ENCODE measurements at regions of chr11 and their contacts with region 1.

Region 1: DNA sequence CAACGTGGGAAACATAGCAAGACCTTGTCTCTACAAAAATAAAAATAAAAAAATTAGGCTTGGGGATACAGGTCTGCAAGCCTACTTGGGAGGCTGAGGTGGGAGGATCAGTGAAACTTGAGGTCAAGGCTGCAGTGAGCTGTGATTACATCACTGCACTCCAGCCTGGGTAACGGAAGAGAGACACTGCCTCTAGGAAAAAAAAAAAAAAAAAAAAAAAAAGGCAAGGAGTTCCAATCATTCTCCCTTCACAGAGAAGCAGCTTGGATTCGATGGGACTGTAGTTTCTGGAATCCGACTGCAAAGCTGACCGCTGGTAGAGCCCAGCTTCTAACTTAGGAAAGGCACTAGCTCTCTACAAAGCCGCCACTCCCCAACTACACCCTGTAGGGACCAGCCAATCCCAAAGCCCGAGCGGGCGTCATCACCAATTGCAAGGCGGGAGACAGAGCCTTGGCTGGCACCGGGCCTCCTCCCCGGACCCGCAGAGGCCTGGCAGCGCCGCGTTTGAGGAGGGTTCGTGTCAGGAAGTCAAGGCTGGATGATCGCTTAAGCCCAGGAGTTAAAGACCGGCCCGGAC is 699 bp upstream of the DDB2 start:
- DNase-seq: peak; percentile 49
- ATAC-seq: peak; percentile 88
- H3K4me3 ChIP-seq: peak overlapping the region; percentile 92
- H3K27ac ChIP-seq: peak overlapping the region; percentile 55
- H3K4me1 ChIP-seq: peaks cover 9% of the 10 kb centered on the region
- H3K27me3 ChIP-seq: no peaks in the 10 kb centered on the region
- CTCF ChIP-seq: no peak
- EP300 ChIP-seq: no peak
- POLR2A ChIP-seq: no peak
- RAD21 ChIP-seq: no peak

Region 2: GRCh38 chr11:47233989-47234668 is 20.1 kb after region 1 on chr11:
- CTCF ChIA-PET with region 1: interaction called, 22 read pairs
- POLR2A ChIA-PET with region 1: interaction called, 4 read pairs
- RAD21 ChIA-PET with region 1: interaction called, 6 read pairs
- SMC1A ChIA-PET with region 1: interaction called, 4 read pairs
- in situ Hi-C with region 1: no loop called
- intact Hi-C with region 1: no loop called
- DNase-seq: no peak
- ATAC-seq: peak; percentile 45
- H3K4me3 ChIP-seq: no peak overlapping the region
- H3K27ac ChIP-seq: no peak overlapping the region
- H3K4me1 ChIP-seq: no peaks in the 10 kb centered on the region
- H3K27me3 ChIP-seq: no peaks in the 10 kb centered on the region
- CTCF ChIP-seq: peak in 2 of 3 experiments; percentile 4 to 9; a peak in 1 of 6 replicates
- EP300 ChIP-seq: no peak
- POLR2A ChIP-seq: 0 out of 2 replicates have a peak, but pooled peaks have one; percentile 2
- RAD21 ChIP-seq: peak; percentile 36

Region 3: DNA sequence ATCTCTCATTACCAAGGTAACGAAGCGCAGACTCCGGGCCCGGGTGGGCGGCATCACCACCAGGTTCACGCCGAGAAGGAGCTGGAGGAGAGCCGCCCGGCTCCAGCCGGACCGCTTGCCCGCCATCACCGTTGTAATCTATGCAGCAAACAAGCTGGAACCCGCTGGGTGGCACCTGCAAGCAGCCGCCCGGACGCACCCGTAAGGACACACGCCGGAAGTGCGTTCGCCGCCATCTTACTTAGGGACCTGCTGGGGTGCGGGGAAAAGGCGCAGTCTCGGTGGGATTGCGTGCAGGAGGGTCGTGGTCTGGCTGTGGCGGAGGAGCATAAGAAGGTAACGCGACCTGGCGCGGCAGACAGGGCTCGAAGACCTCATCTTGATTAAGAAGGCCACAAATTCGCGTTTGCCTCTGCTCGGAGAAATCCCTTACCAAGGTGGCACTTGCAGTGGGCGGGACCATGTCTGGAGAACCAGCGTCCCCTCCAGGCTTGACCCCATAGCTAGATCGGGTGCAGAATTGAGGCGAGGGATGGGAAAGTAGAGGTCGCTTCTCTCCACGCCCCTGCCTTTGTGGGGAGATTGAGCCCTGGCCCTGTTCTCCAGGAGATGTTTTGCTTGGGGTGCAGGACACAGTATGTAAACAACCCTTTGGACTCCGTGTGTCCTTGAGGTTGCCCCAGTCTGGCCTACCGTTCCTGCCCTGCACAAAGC is 34.7 kb after region 1 on chr11 and contains the start of gene ACP2:
- CTCF ChIA-PET with region 1: interaction called, 28 read pairs
- POLR2A ChIA-PET with region 1: interaction called, 63 read pairs
- RAD21 ChIA-PET with region 1: interaction called, 65 read pairs
- SMC1A ChIA-PET with region 1: interaction called, 36 read pairs
- in situ Hi-C with region 1: no loop called
- intact Hi-C with region 1: no loop called
- DNase-seq: peak; percentile 64
- ATAC-seq: peak; percentile 95
- H3K4me3 ChIP-seq: peak within 1 kb of the TSS; percentile 91
- H3K27ac ChIP-seq: peak within 1 kb of the TSS; percentile 90
- H3K4me1 ChIP-seq: peaks cover 8% of the 10 kb centered on the region
- H3K27me3 ChIP-seq: no peaks in the 10 kb centered on the region
- CTCF ChIP-seq: peak; percentile 33 to 51 (median 43); a peak in 5 of 6 replicates
- EP300 ChIP-seq: no peak
- POLR2A ChIP-seq: peak; percentile 94
- RAD21 ChIP-seq: peak; percentile 45
- polyA plus RNA-seq, gene ACP2: 0.98 to 1.1 TPM

Region 4: DNA sequence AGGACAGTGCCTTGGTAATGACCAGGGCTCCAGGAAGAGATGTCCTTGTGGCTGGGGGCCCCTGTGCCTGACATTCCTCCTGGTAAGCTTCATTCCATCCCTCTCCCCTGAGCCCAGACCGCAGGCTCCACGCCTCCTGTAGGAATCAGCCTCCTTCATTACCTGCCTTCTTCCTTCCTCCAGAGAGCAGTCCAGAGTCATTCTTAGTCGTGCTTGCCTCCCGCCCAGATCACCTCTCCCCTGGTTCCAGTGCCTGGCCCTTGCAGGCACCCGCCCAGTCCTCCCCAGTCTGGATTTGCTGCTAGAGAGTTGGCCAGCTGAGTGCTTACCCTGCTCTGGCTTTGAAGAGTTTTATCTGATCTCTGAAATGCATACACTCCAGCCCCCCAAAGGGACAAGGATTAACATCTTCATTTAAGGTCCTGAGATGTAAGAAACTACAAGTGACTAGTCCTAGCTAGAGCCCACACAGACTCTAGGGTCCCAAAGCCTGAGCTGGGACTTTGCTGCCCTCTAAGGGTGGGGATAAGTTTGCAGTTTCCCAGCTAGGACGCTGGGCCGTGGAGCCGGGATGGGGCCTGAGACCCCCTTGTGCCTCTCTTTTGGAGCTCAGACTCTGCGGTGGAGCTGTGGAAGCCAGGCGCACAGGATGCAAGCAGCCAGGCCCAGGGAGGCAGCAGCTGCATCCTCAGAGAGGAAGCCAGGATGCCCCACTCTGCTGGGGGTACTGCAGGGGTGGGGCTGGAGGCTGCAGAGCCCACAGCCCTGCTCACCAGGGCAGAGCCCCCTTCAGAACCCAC is 45.3 kb after region 1 on chr11:
- CTCF ChIA-PET with region 1: interaction called, 33 read pairs
- POLR2A ChIA-PET with region 1: interaction called, 5 read pairs
- RAD21 ChIA-PET with region 1: interaction called, 16 read pairs
- SMC1A ChIA-PET with region 1: interaction called, 8 read pairs
- in situ Hi-C with region 1: no loop called
- intact Hi-C with region 1: no loop called
- DNase-seq: no peak
- ATAC-seq: peak; percentile 94
- H3K4me3 ChIP-seq: no peak overlapping the region
- H3K27ac ChIP-seq: no peak overlapping the region
- H3K4me1 ChIP-seq: no peaks in the 10 kb centered on the region
- H3K27me3 ChIP-seq: no peaks in the 10 kb centered on the region
- CTCF ChIP-seq: peak; percentile 68 to 81 (median 76)
- EP300 ChIP-seq: no peak
- POLR2A ChIP-seq: no peak
- RAD21 ChIP-seq: peak; percentile 75

Region 5: GRCh38 chr11:47269002-47269828 is 55.1 kb after region 1 on chr11:
- CTCF ChIA-PET with region 1: interaction called, 11 read pairs
- POLR2A ChIA-PET with region 1: interaction called, 6 read pairs
- RAD21 ChIA-PET with region 1: interaction called, 15 read pairs
- SMC1A ChIA-PET with region 1: interaction called, 7 read pairs
- in situ Hi-C with region 1: no loop called
- intact Hi-C with region 1: loop called (anchors 1 kb)
- DNase-seq: no peak
- ATAC-seq: peak; percentile 77
- H3K4me3 ChIP-seq: peak overlapping the region; percentile 78
- H3K27ac ChIP-seq: peak overlapping the region; percentile 79
- H3K4me1 ChIP-seq: peaks cover 23% of the 10 kb centered on the region
- H3K27me3 ChIP-seq: no peaks in the 10 kb centered on the region
- CTCF ChIP-seq: 0 out of 6 replicates have a peak, but pooled peaks of 1 of the 3 experiments have one; percentile 20
- EP300 ChIP-seq: 0 out of 4 replicates have a peak, but pooled peaks of 1 of the 2 experiments have one; percentile 18
- POLR2A ChIP-seq: peak; percentile 14
- RAD21 ChIP-seq: no peak

Region 6: GRCh38 chr11:47399860-47400767 is 186.0 kb after region 1 on chr11:
- CTCF ChIA-PET with region 1: no interaction called
- POLR2A ChIA-PET with region 1: interaction called, 17 read pairs
- RAD21 ChIA-PET with region 1: interaction called, 3 read pairs
- SMC1A ChIA-PET with region 1: interaction called, 5 read pairs
- in situ Hi-C with region 1: no loop called
- intact Hi-C with region 1: no loop called
- DNase-seq: no peak
- ATAC-seq: peak; percentile 87
- H3K4me3 ChIP-seq: peak overlapping the region; percentile 76
- H3K27ac ChIP-seq: peak overlapping the region; percentile 89
- H3K4me1 ChIP-seq: peaks cover 30% of the 10 kb centered on the region
- H3K27me3 ChIP-seq: no peaks in the 10 kb centered on the region
- CTCF ChIP-seq: no peak
- EP300 ChIP-seq: no peak
- POLR2A ChIP-seq: peak; percentile 78
- RAD21 ChIP-seq: no peak

Measured in GM12878 (cell line).